T-cell (primary cell): ENCODE measurements at regions of chr17 and their contacts with region 1.

Region 1: DNA sequence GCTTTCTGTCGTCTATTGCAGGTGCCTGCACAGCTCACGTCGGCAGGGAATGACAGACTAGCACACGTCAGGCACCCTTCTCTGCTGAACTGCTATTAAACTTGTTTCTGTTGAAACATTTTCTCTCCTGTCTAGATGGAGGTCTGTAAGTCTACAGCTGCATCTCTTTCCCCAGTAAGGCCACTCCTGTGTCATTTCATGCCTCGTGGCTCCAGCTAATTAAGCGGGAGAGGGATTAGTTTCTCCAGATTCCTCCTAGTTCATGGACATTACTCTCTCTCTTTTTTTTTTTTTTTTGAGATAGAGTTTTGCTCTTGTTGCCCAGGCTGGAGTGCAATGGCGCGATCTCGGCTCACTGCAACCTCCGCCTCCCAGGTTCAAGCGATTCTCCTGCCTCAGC is 54.5 kb downstream of the FOXK2 start:
- DNase-seq: no peak
- ATAC-seq: no peak
- H3K4me3 ChIP-seq: no peak overlapping the region
- H3K4me3 Mint-ChIP-seq: no peak overlapping the region
- H3K27ac ChIP-seq: no peak overlapping the region
- H3K27ac Mint-ChIP-seq: no peak overlapping the region
- H3K4me1 ChIP-seq: no peaks in the 10 kb centered on the region
- H3K4me1 Mint-ChIP-seq: no peaks in the 10 kb centered on the region
- H3K27me3 ChIP-seq: no peaks in the 10 kb centered on the region
- H3K27me3 Mint-ChIP-seq: no peaks in the 10 kb centered on the region

Region 2: GRCh38 chr17:82230627-82231311 is 343.3 kb before region 1 on chr17:
- CTCF ChIA-PET with region 1: no interaction called
- POLR2A ChIA-PET with region 1: no interaction called
- DNase-seq: peak in 21 of 35 experiments; percentile 32 to 71 (median 44)
- ATAC-seq: peak; percentile 14 to 23 (median 18)
- H3K4me3 ChIP-seq: peak overlapping the region; percentile 40 to 54
- H3K4me3 Mint-ChIP-seq: peak overlapping the region; percentile 70 to 80 (median 76)
- H3K27ac ChIP-seq: peak overlapping the region; percentile 68
- H3K27ac Mint-ChIP-seq: peak overlapping the region in 1 of 2 donors; percentile 83
- H3K4me1 ChIP-seq: peaks cover 24 to 56% of the 10 kb centered on the region in 2 experiments
- H3K4me1 Mint-ChIP-seq: peaks cover 9 to 20% (median 10%) of the 10 kb centered on the region in 3 donors
- H3K27me3 ChIP-seq: peaks cover 0 to 7% of the 10 kb centered on the region in 2 experiments
- H3K27me3 Mint-ChIP-seq: no peaks in the 10 kb centered on the region

Region 3: GRCh38 chr17:82592767-82593589 is 18.9 kb after region 1 on chr17:
- CTCF ChIA-PET with region 1: no interaction called
- POLR2A ChIA-PET with region 1: interaction called in 1 of 2 experiments, 10 read pairs
- DNase-seq: peak; percentile 36 to 84 (median 59)
- ATAC-seq: peak; percentile 25 to 60 (median 42)
- H3K4me3 ChIP-seq: peak overlapping the region; percentile 55 to 63
- H3K4me3 Mint-ChIP-seq: peak overlapping the region; percentile 66 to 74 (median 73)
- H3K27ac ChIP-seq: peak overlapping the region; percentile 74
- H3K27ac Mint-ChIP-seq: peak overlapping the region; percentile 84 to 89
- H3K4me1 ChIP-seq: peaks cover 6 to 44% of the 10 kb centered on the region in 2 experiments
- H3K4me1 Mint-ChIP-seq: peaks cover 37 to 50% (median 44%) of the 10 kb centered on the region in 3 donors
- H3K27me3 ChIP-seq: no peaks in the 10 kb centered on the region
- H3K27me3 Mint-ChIP-seq: no peaks in the 10 kb centered on the region

Region 4: DNA sequence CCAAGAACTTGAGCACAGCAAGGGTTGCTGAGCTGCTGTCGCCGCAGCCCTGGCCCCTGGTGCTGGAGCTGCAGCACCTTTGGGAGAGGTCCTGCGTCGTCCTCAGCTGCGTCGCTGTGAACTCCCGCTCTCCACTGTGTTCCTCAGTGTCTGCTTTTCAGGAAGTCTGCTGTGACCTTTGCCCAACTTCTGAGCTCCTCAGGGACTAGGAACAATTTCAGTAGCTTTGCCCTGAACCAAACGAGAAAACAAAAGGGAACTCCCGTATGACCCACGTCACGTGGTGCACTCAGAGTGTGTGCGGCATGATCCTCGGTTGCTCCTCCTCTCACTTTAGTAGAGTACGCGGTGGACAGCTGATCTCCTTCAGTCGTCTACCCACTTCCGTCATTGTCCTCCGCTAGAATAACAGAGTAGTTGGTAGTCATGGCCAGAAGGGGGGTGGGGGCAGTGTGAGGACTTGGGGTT is 30.0 kb after region 1 on chr17:
- CTCF ChIA-PET with region 1: no interaction called
- POLR2A ChIA-PET with region 1: no interaction called
- DNase-seq: peak in 32 of 35 experiments; percentile 20 to 74 (median 46)
- ATAC-seq: peak; percentile 54 to 97 (median 81)
- H3K4me3 ChIP-seq: no peak overlapping the region
- H3K4me3 Mint-ChIP-seq: peak overlapping the region in 1 of 3 donors; percentile 31
- H3K27ac ChIP-seq: no peak overlapping the region
- H3K27ac Mint-ChIP-seq: peak overlapping the region in 1 of 2 donors; percentile 87
- H3K4me1 ChIP-seq: peaks cover 3 to 12% of the 10 kb centered on the region in 2 experiments
- H3K4me1 Mint-ChIP-seq: peaks cover 0 to 16% (median 13%) of the 10 kb centered on the region in 3 donors
- H3K27me3 ChIP-seq: no peaks in the 10 kb centered on the region
- H3K27me3 Mint-ChIP-seq: no peaks in the 10 kb centered on the region

Region 5: DNA sequence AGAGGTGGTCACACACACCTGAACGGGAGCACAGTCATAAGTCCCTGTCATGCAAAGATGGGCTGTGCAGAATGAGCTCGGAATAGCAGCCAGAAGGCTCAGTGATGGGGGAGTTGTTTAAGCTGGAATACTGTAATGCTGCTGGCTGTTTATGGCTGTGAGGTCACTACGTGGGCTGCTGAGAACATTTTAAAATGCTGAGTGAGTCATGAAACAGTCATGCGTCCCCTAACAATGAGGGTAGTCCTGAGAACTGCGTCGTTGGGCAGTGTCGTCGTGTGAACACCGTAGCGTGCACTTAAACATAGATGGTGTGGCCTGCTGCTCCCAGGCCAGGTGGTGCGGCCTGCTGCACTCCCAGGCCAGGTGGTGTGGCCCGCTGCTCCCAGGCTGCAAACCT is 217.5 kb after region 1 on chr17:
- CTCF ChIA-PET with region 1: no interaction called
- POLR2A ChIA-PET with region 1: no interaction called
- DNase-seq: no peak
- ATAC-seq: no peak
- H3K4me3 ChIP-seq: no peak overlapping the region
- H3K4me3 Mint-ChIP-seq: no peak overlapping the region
- H3K27ac ChIP-seq: no peak overlapping the region
- H3K27ac Mint-ChIP-seq: no peak overlapping the region
- H3K4me1 ChIP-seq: no peaks in the 10 kb centered on the region
- H3K4me1 Mint-ChIP-seq: peaks cover 0 to 12% (median 0%) of the 10 kb centered on the region in 3 donors
- H3K27me3 ChIP-seq: no peaks in the 10 kb centered on the region
- H3K27me3 Mint-ChIP-seq: no peaks in the 10 kb centered on the region